Mucosa of descending colon (tissue), 3 donors: ENCODE measurements at regions of chr11 and their contacts with region 1.

Region 1: GRCh38 chr11:70191495-70192140 is 11.5 kb upstream of the FADD start:
- DNase-seq: peak; percentile 73 to 86 (median 84)
- ATAC-seq: peak; percentile 91
- H3K4me3 ChIP-seq: no peak overlapping the region
- H3K4me1 ChIP-seq: no peaks in the 10 kb centered on the region
- CTCF ChIP-seq: peak; percentile 67

Region 2: DNA sequence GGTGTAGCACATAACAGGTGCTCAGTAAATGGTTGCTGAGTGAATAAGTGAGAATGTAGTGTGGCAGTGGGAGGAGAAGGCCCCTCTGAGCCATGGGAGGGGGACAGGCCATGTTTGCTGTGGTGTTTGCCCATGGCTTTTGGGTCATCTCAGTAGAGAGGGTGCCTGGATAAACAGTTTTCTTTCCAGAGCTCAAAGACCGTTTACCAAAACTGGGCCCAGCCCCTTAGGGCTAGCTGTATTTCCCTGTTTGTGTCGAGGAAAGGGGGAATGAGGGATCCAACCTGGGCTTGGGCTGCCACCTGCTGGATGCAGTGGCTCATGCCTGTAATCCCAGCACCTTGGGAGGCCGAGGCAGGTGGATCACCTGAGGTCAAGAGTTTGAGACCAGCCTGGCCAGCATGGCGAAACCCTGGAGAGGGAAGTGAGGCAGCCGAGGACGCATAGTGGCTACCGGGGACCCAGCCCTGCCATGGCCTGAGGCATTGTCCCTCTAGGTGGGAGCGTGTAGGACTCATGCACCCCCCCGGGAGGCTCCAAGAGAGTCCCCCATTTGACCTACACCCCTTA is 507.8 kb before region 1 on chr11:
- intact Hi-C with region 1: loop called (anchors 5 to 10 kb)
- DNase-seq: peak in 2 of 3 donors; percentile 47 to 57
- ATAC-seq: peak; percentile 62
- H3K4me3 ChIP-seq: no peak overlapping the region
- H3K4me1 ChIP-seq: no peaks in the 10 kb centered on the region
- CTCF ChIP-seq: no peak

Region 3: GRCh38 chr11:69909561-69910496 is 281.8 kb before region 1 on chr11:
- intact Hi-C with region 1: loop called (anchors 5 kb)
- DNase-seq: peak in 2 of 3 donors; percentile 23 to 42
- ATAC-seq: no peak
- H3K4me3 ChIP-seq: no peak overlapping the region
- H3K4me1 ChIP-seq: peaks cover 14% of the 10 kb centered on the region
- CTCF ChIP-seq: peak; percentile 20

Region 4: DNA sequence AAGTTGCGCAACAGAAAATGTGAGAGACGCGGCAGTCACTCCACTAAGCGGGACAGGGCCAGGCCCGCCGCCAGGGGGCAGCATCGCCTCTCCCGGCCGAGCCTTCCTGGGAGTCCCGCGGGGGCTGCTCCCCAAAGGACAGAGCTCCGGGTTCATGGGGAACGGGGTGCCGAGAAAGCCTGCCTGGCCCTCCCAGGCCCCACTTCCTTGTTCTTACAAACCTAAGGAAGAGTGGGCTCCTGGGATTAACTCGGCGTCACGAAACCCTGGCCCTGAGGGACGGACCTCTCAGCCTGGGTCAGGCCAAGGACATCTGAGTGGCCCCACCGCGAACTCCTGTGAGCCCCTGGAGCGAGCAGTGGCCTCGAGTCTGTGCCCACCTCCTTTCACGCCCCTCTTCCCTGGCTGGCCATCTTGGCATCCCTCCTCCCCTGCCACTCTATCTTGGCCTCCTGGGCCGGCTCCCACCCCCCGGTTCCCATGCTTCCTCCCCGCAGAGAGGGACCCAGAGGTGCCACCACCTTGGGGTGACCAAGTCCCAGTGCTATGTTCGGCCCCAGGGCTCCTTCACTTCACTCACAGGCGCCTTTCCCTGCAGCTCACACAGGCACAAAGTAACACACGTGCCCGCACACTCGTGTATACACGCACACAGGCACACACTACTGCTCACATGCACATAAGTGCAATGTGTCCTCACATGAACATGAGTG is 272.5 kb before region 1 on chr11:
- intact Hi-C with region 1: loop called (anchors 5 kb)
- DNase-seq: peak; percentile 64 to 80 (median 80)
- ATAC-seq: peak; percentile 68
- H3K4me3 ChIP-seq: no peak overlapping the region
- H3K4me1 ChIP-seq: peaks cover 10% of the 10 kb centered on the region
- CTCF ChIP-seq: peak; percentile 74

Region 5: DNA sequence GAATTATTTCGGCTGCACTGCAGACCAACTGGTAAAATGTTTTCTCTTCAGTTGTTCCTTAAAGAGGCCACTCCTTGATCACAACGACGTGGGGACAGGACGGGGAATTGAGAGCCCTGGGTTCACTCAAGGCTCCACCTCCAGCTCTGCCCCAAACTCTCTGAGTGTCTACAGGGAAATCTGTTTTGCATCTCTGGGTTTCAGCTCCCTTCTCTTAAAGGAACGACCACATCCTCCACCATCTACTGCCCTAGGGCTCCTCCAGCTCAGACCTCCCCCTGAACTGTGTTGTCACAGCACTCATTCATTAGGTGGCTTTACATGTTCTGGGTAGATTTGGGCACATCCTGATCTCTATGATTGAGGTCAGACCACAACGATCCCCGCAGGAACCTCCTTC is 73.7 kb after region 1 on chr11:
- intact Hi-C with region 1: no loop called
- DNase-seq: no peak
- ATAC-seq: no peak
- H3K4me3 ChIP-seq: no peak overlapping the region
- H3K4me1 ChIP-seq: peaks cover 5% of the 10 kb centered on the region
- CTCF ChIP-seq: no peak

Region 6: DNA sequence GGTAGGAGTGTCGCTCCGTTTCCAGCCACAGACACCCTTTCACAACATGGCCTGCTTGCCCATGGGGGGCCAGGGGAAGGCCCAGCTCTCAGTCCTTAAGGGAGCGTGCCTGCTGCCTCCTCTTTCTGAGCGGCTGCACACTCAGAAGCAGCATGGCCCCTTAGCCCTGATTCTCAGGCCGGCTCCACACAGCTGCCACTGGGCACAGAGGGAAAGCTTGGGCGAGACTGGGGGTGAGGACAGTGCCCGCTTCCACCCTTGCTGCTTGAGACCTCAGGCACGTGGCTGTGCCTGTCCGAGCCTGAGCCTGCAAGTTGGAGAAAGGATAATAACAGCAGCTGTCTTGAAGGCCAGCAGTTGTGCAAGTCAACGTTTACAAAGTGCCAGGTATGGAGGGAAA is 644.5 kb after region 1 on chr11:
- intact Hi-C with region 1: no loop called
- DNase-seq: peak in 1 of 3 donors; percentile 22
- ATAC-seq: peak; percentile 13
- H3K4me3 ChIP-seq: no peak overlapping the region
- H3K4me1 ChIP-seq: no peaks in the 10 kb centered on the region
- CTCF ChIP-seq: no peak

Region 7: GRCh38 chr11:71266221-71266833 is 1074.7 kb after region 1 on chr11:
- intact Hi-C with region 1: no loop called
- DNase-seq: peak; percentile 77 to 86 (median 79)
- ATAC-seq: peak; percentile 94
- H3K4me3 ChIP-seq: no peak overlapping the region
- H3K4me1 ChIP-seq: peaks cover 13% of the 10 kb centered on the region
- CTCF ChIP-seq: no peak